PC-9 (cell line): ENCODE measurements at regions of chr4 and their contacts with region 1.

Region 1: GRCh38 chr4:42048407-42048806 is 58.1 kb downstream of the SLC30A9 start:
- DNase-seq: peak in 1 of 2 experiments; percentile 68
- H3K4me3 ChIP-seq: no peak overlapping the region
- H3K27ac ChIP-seq: no peak overlapping the region
- H3K4me1 ChIP-seq: no peaks in the 10 kb centered on the region
- H3K27me3 ChIP-seq: no peaks in the 10 kb centered on the region
- CTCF ChIP-seq: no peak

Region 2: DNA sequence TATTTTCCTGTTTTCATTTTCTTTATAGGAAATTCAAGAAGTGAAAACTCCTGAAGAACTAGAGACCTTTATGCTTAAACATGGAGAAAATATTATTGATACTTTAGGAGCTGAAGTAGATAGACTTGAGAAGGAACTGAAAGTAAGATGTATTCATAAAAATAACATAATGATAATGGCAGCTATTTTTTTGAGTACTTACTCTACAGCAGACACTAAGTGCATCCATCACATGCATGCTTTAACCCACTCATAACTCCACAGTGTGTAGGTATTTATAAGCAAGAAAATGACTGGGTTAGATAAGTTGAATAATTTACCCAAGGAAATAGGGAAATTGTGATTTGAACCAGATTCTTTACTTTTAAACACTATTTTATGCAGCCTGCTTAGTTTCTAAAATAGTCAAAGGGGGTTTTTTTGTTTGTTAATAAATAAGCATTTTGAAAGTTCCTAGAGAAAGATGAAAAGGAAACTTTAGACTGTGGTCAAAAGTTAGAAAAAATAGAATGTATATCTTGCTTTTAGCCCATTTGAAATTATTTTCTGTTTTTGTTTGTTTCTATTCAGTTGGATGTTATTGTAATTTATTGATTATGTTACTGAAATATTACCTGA is 29.9 kb after region 1 on chr4:
- CTCF ChIA-PET with region 1: no interaction called
- POLR2A ChIA-PET with region 1: no interaction called
- intact Hi-C with region 1: loop called (anchors 1 kb)
- DNase-seq: no peak
- H3K4me3 ChIP-seq: no peak overlapping the region
- H3K27ac ChIP-seq: no peak overlapping the region
- H3K4me1 ChIP-seq: no peaks in the 10 kb centered on the region
- H3K27me3 ChIP-seq: no peaks in the 10 kb centered on the region
- CTCF ChIP-seq: no peak